Ascending aorta (tissue), 2 donors: ENCODE measurements at regions of chr7 and their contacts with region 1.

Region 1: GRCh38 chr7:65037740-65038678 is 31.5 kb upstream of the ERV3-1 start:
- DNase-seq: peak; percentile 74 to 96
- H3K4me3 ChIP-seq: peak overlapping the region; percentile 86 to 98
- H3K27ac ChIP-seq: peak overlapping the region; percentile 86 to 87
- H3K4me1 ChIP-seq: peaks cover 0 to 5% of the 10 kb centered on the region in 2 donors
- H3K27me3 ChIP-seq: no peaks in the 10 kb centered on the region
- CTCF ChIP-seq: peak in 1 of 3 experiments; percentile 7

Region 2: DNA sequence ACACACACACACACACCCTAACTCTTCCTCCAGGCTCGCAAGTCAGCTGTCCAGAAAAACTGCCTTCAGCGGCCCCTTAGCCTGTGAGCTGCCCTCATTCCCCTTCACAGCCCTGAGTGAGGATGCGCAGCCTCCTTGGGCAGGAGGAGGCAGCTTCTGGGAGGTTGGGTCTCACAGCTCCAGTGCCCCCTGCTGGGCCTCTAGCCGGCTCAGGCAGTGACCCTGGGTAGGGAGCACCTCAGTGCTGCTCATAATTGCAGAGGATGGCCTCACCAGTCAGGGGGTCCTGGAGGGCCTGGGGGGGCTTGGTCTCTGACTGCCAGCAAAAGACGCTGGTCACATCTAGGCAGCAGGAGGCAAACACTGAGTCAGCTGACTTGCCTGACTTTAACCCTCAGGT is 91.2 kb before region 1 on chr7:
- intact Hi-C with region 1: no loop called
- DNase-seq: no peak
- H3K4me3 ChIP-seq: peak overlapping the region; percentile 51 to 66
- H3K27ac ChIP-seq: no peak overlapping the region
- H3K4me1 ChIP-seq: peaks cover 0 to 9% of the 10 kb centered on the region in 2 donors
- H3K27me3 ChIP-seq: no peaks in the 10 kb centered on the region
- CTCF ChIP-seq: no peak

Region 3: GRCh38 chr7:64999165-65000004 is 38.6 kb before region 1 on chr7:
- intact Hi-C with region 1: loop called (anchors 1 kb)
- DNase-seq: peak in 1 of 2 donors; percentile 68
- H3K4me3 ChIP-seq: no peak overlapping the region
- H3K27ac ChIP-seq: peak overlapping the region in 1 of 2 donors; percentile 83
- H3K4me1 ChIP-seq: peaks cover 0 to 33% of the 10 kb centered on the region in 2 donors
- H3K27me3 ChIP-seq: no peaks in the 10 kb centered on the region
- CTCF ChIP-seq: no peak

Region 4: GRCh38 chr7:65006094-65006992 is 31.7 kb before region 1 on chr7 and contains the start of gene ERV3-1:
- intact Hi-C with region 1: loop called (anchors 1 kb)
- DNase-seq: peak; percentile 92 to 98
- H3K4me3 ChIP-seq: peak within 1 kb of the TSS; percentile 85 to 87
- H3K27ac ChIP-seq: peak within 1 kb of the TSS; percentile 80 to 90
- H3K4me1 ChIP-seq: peaks cover 4 to 24% of the 10 kb centered on the region in 2 donors
- H3K27me3 ChIP-seq: no peaks in the 10 kb centered on the region
- CTCF ChIP-seq: no peak
- total RNA-seq, gene ERV3-1: 9.5 TPM

Region 5: GRCh38 chr7:65233409-65234019 is 195.5 kb after region 1 on chr7:
- intact Hi-C with region 1: no loop called
- DNase-seq: no peak
- H3K4me3 ChIP-seq: no peak overlapping the region
- H3K27ac ChIP-seq: no peak overlapping the region
- H3K4me1 ChIP-seq: no peaks in the 10 kb centered on the region
- H3K27me3 ChIP-seq: no peaks in the 10 kb centered on the region
- CTCF ChIP-seq: no peak

Region 6: GRCh38 chr7:65429642-65430343 is 391.8 kb after region 1 on chr7:
- intact Hi-C with region 1: no loop called
- DNase-seq: no peak
- H3K4me3 ChIP-seq: no peak overlapping the region
- H3K27ac ChIP-seq: no peak overlapping the region
- H3K4me1 ChIP-seq: no peaks in the 10 kb centered on the region
- H3K27me3 ChIP-seq: no peaks in the 10 kb centered on the region
- CTCF ChIP-seq: no peak